ENCODE measurements at regions of chr5 and their contacts with region 1.

Region 1: DNA sequence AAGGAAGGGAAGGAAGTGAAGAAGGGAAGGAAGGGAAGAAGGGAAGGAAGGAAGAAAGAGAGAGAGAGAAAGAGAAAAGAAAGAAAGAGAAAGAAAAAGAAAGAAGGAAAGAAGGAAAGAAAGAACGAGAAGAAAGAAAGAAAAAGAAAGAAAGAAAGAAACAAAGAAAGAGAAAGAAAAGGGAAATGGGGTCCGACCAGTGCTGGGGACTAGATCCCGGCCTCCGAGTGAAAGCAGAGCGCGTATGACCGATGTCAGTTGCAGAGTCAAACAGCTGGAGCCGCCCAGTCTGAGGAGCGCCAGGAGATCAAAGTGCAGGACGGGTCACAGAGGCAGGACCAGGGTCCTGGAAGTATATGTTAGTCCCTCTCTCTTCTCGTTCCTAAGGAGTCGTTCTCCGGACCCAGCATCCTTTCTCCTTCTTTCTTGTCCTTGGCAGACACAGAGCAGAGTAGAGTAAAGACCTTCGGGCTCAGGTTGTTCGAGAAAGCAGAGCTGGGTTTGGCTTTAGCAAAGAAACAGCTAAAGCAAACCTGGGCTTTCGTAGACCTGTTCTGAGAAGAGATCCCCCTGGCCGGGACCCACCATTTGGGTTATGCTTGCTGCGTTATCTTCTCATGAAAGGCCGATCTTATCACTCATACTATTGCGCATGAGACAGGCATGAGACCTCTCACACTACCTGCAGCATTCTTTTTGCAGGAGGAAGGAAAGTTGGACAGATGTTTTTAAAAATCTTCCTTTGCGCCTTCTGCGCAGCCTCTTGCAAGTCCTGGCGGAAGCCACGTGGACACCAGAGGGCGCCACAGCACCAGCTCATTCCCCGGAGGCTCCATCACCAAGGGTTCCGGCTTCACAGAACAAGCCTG is 305.2 kb upstream of the MSX2 start:
- DNase-seq: peak; percentile 36 to 66 (median 53)
- H3K4me3 ChIP-seq: no peak overlapping the region
- H3K4me3 Mint-ChIP-seq: peak overlapping the region in 1 of 2 donors; percentile 54
- H3K27ac ChIP-seq: no peak overlapping the region
- H3K27ac Mint-ChIP-seq: no peak overlapping the region
- H3K4me1 ChIP-seq: no peaks in the 10 kb centered on the region
- H3K4me1 Mint-ChIP-seq: peaks cover 2% of the 10 kb centered on the region
- H3K27me3 ChIP-seq: peaks cover 2 to 5% of the 10 kb centered on the region in 2 donors
- H3K27me3 Mint-ChIP-seq: peaks cover 6 to 28% (median 22%) of the 10 kb centered on the region in 3 donors
- CTCF ChIP-seq: peak; percentile 84

Region 2: GRCh38 chr5:174386306-174386705 is 32.9 kb before region 1 on chr5:
- intact Hi-C with region 1: no loop called
- DNase-seq: no peak
- H3K4me3 ChIP-seq: no peak overlapping the region
- H3K4me3 Mint-ChIP-seq: no peak overlapping the region
- H3K27ac ChIP-seq: no peak overlapping the region
- H3K27ac Mint-ChIP-seq: no peak overlapping the region
- H3K4me1 ChIP-seq: no peaks in the 10 kb centered on the region
- H3K4me1 Mint-ChIP-seq: no peaks in the 10 kb centered on the region
- H3K27me3 ChIP-seq: peaks cover 0 to 2% of the 10 kb centered on the region in 2 donors
- H3K27me3 Mint-ChIP-seq: peaks cover 3 to 16% (median 10%) of the 10 kb centered on the region in 3 donors
- CTCF ChIP-seq: no peak

Region 3: GRCh38 chr5:174436781-174437201 is 17.6 kb after region 1 on chr5:
- intact Hi-C with region 1: no loop called
- DNase-seq: no peak
- H3K4me3 ChIP-seq: no peak overlapping the region
- H3K4me3 Mint-ChIP-seq: no peak overlapping the region
- H3K27ac ChIP-seq: no peak overlapping the region
- H3K27ac Mint-ChIP-seq: no peak overlapping the region
- H3K4me1 ChIP-seq: no peaks in the 10 kb centered on the region
- H3K4me1 Mint-ChIP-seq: no peaks in the 10 kb centered on the region
- H3K27me3 ChIP-seq: no peaks in the 10 kb centered on the region
- H3K27me3 Mint-ChIP-seq: peaks cover 0 to 4% (median 4%) of the 10 kb centered on the region in 3 donors
- CTCF ChIP-seq: no peak

Region 4: DNA sequence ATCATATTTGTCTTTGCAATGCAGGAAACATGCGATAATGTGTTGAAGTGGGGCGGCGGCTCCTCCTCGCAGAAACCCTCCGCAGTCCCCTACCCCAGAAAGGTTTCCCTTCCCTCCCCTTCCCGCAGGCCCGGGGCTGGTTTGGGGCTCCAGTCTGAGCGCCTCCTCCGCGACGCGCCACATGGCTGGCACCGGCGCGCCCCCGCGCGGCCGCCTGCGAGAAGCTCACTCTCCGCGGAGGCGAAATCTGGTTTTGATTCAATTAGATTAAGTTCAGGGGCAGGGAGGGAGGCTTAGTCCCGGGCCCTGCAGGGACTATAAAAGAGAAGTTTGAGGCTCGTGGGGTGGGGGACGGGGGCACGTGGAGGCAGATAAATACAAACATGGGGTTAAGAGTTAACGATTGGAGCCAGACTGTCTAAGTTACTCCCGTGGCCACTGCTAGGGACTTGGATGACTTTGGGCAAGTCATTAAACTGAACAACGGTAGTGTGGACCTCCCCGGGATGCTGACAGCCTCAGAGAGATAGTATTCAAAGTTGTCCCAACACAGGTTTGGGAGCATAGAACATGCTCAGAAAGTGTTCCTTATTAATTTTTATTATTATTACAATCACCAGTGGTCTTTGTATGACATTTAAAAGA is 374.6 kb after region 1 on chr5:
- intact Hi-C with region 1: loop called (anchors 1 to 2 kb)
- DNase-seq: peak in 1 of 3 donors; percentile 16
- H3K4me3 ChIP-seq: no peak overlapping the region
- H3K4me3 Mint-ChIP-seq: no peak overlapping the region
- H3K27ac ChIP-seq: no peak overlapping the region
- H3K27ac Mint-ChIP-seq: peak overlapping the region in 1 of 7 donors; percentile 31
- H3K4me1 ChIP-seq: no peaks in the 10 kb centered on the region
- H3K4me1 Mint-ChIP-seq: peaks cover 2% of the 10 kb centered on the region
- H3K27me3 ChIP-seq: peaks cover 6 to 16% of the 10 kb centered on the region in 2 donors
- H3K27me3 Mint-ChIP-seq: peaks cover 8 to 28% (median 20%) of the 10 kb centered on the region in 3 donors
- CTCF ChIP-seq: peak; percentile 82

Region 5: DNA sequence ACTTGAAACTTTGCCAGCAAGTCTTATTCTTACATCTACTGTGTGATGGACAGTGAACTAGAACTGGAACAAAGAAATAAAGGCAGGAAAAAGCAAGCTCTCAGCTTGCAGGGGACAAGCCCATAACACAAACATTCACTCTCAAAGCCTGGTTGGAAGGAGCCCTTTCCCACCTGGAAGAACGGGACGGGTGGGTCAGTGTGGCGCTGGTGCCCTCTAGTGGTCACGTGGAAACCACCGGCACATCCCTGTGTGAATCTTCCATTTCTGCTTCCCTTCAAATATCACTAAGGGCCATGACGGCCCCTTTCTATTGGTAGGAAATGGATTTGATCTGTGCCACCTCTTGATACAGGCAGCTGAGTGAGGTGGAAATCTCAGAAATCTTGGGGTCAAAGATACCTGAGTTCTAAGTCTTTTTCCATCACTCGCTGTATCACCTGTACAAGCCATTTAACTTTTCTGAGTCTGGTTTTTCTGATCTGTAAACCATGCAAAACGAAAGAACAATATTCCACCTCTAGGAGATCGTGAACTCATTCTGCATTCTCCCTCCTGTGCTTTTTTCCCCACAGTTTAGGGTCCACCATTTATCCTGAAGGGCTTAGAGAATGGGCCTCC is 516.8 kb after region 1 on chr5:
- intact Hi-C with region 1: loop called (anchors 1 to 5 kb)
- DNase-seq: peak in 1 of 3 donors; percentile 19
- H3K4me3 ChIP-seq: no peak overlapping the region
- H3K4me3 Mint-ChIP-seq: no peak overlapping the region
- H3K27ac ChIP-seq: no peak overlapping the region
- H3K27ac Mint-ChIP-seq: no peak overlapping the region
- H3K4me1 ChIP-seq: no peaks in the 10 kb centered on the region
- H3K4me1 Mint-ChIP-seq: no peaks in the 10 kb centered on the region
- H3K27me3 ChIP-seq: no peaks in the 10 kb centered on the region
- H3K27me3 Mint-ChIP-seq: peaks cover 0 to 6% (median 4%) of the 10 kb centered on the region in 3 donors
- CTCF ChIP-seq: peak; percentile 92

Region 6: GRCh38 chr5:175025077-175025476 is 605.9 kb after region 1 on chr5:
- intact Hi-C with region 1: no loop called
- DNase-seq: no peak
- H3K4me3 ChIP-seq: no peak overlapping the region
- H3K4me3 Mint-ChIP-seq: no peak overlapping the region
- H3K27ac ChIP-seq: no peak overlapping the region
- H3K27ac Mint-ChIP-seq: no peak overlapping the region
- H3K4me1 ChIP-seq: no peaks in the 10 kb centered on the region
- H3K4me1 Mint-ChIP-seq: no peaks in the 10 kb centered on the region
- H3K27me3 ChIP-seq: no peaks in the 10 kb centered on the region
- H3K27me3 Mint-ChIP-seq: peaks cover under 1 to 5% (median 1%) of the 10 kb centered on the region in 3 donors
- CTCF ChIP-seq: no peak